Dorsolateral prefrontal cortex (tissue), 120 donors: ENCODE measurements at regions of chr17 and their contacts with region 1.

Region 1: GRCh38 chr17:51006601-51007000 is 114.1 kb downstream of the SPAG9 start:
- DNase-seq: no peak
- H3K4me3 ChIP-seq: peak overlapping the region in 3 of 59 donors; percentile 3 to 14 (median 10)
- H3K27ac ChIP-seq: peak overlapping the region in 53 of 59 donors; percentile 1 to 91 (median 67)
- H3K27me3 ChIP-seq: no peaks in the 10 kb centered on the region
- CTCF ChIP-seq: no peak

Region 2: GRCh38 chr17:50986989-50987660 is 19.5 kb before region 1 on chr17:
- intact Hi-C with region 1: no loop called
- DNase-seq: no peak
- H3K4me3 ChIP-seq: no peak overlapping the region
- H3K27ac ChIP-seq: peak overlapping the region in 56 of 59 donors; percentile 3 to 88 (median 64)
- H3K27me3 ChIP-seq: no peaks in the 10 kb centered on the region
- CTCF ChIP-seq: no peak

Region 3: GRCh38 chr17:51046514-51047384 is 40.1 kb after region 1 on chr17:
- intact Hi-C with region 1: loop called in 1 of 2 experiments (anchors 5 kb)
- DNase-seq: peak; percentile 61 to 94 (median 92)
- H3K4me3 ChIP-seq: peak overlapping the region; percentile 49 to 82 (median 67)
- H3K27ac ChIP-seq: peak overlapping the region; percentile 77 to 97 (median 92)
- H3K27me3 ChIP-seq: no peaks in the 10 kb centered on the region
- CTCF ChIP-seq: peak in 19 of 56 donors; percentile 3 to 33 (median 17)